Ascending aorta (tissue), 2 donors: ENCODE measurements at regions of chr18 and their contacts with region 1.

Region 1: GRCh38 chr18:2655178-2655953 is at the start of gene SMCHD1:
- DNase-seq: peak; percentile 66 to 93
- H3K4me3 ChIP-seq: peak within 1 kb of the TSS; percentile 83 to 95
- H3K27ac ChIP-seq: peak within 1 kb of the TSS; percentile 97 to 98
- H3K4me1 ChIP-seq: peaks cover 3 to 27% of the 10 kb centered on the region in 2 donors
- H3K27me3 ChIP-seq: no peaks in the 10 kb centered on the region
- CTCF ChIP-seq: no peak
- total RNA-seq, gene SMCHD1: 29.2 TPM

Region 2: DNA sequence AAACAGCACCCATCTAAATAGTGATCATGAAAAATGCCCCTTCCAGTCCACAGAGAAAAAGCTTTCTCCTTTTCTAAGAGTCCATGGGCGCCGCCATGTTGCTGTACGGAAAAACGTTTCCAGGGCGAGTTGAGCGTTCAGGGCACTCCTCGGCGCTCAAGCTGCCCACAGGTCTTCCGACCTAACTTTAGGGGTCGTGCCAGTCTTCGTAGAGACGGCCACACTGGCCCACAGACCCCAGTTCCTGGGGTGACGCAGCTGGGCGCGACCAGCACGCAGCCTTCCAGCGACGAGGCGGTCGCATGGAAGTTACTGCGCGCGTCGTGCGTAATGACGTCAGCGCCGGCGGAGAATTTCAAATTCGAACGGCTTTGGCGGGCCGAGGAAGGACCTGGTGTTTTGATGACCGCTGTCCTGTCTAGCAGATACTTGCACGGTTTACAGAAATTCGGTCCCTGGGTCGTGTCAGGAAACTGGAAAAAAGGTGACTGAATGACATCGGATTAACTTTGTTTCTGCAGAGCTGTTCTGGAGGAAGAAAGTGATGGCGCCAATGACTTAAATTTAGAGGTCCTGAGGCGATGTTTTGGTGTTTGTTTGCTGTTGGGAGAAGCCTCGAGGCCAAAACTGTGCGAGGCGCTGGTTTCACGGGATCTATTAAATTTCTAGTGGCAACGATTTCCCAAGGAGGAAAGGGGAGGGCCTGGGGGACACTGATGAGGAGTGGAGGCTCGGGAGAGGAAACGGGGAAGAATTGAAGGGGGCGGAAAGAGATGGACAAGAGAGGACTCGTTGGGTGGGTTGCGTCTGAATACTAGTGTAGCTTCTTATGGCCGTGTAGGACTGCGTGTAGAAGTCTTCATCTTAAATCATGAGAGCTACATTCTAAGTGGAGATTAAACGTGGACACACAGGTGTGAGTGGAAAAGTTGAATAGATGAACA is 83.9 kb before region 1 on chr18 and contains the starts of genes METTL4 and NDC80:
- intact Hi-C with region 1: loop called (anchors 1 kb)
- DNase-seq: peak; percentile 10 to 86
- H3K4me3 ChIP-seq: peak within 1 kb of the TSS; percentile 65 to 66
- H3K27ac ChIP-seq: peak within 1 kb of the TSS; percentile 97 to 99
- H3K4me1 ChIP-seq: peaks cover 0 to 5% of the 10 kb centered on the region in 2 donors
- H3K27me3 ChIP-seq: no peaks in the 10 kb centered on the region
- CTCF ChIP-seq: no peak
- total RNA-seq, gene METTL4: not detected
- total RNA-seq, gene NDC80: not detected

Region 3: DNA sequence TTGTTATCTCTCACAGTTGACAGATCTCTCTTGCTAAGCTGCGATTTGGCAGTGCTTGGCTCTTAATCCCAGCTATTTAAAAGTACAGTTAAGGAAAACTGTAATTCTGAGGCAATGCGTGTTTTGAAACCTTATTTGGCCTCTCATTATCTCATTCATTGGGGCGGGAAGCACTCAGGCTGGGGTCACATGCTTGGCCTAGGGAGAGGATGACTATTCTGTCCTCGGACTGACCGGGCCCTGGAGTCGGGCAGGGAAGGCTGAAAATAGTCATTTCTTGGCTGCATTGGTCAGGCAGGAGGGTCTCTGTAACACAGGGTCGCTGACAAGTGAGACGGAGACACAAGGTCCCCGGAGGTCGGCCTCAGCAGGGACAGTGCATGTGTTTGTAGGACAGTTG is 171.2 kb after region 1 on chr18:
- intact Hi-C with region 1: no loop called
- DNase-seq: no peak
- H3K4me3 ChIP-seq: no peak overlapping the region
- H3K27ac ChIP-seq: peak overlapping the region in 1 of 2 donors; percentile 27
- H3K4me1 ChIP-seq: no peaks in the 10 kb centered on the region
- H3K27me3 ChIP-seq: no peaks in the 10 kb centered on the region
- CTCF ChIP-seq: no peak